Activated CD4-positive, alpha-beta T cell treated with anti-CD3 and anti-CD28 coated beads, Interleukin-2, amount 10 ng/mL, durations not matched to agents 24 days and 14 days (primary cell): ENCODE measurements at regions of chr6 and their contacts with region 1.

Region 1: DNA sequence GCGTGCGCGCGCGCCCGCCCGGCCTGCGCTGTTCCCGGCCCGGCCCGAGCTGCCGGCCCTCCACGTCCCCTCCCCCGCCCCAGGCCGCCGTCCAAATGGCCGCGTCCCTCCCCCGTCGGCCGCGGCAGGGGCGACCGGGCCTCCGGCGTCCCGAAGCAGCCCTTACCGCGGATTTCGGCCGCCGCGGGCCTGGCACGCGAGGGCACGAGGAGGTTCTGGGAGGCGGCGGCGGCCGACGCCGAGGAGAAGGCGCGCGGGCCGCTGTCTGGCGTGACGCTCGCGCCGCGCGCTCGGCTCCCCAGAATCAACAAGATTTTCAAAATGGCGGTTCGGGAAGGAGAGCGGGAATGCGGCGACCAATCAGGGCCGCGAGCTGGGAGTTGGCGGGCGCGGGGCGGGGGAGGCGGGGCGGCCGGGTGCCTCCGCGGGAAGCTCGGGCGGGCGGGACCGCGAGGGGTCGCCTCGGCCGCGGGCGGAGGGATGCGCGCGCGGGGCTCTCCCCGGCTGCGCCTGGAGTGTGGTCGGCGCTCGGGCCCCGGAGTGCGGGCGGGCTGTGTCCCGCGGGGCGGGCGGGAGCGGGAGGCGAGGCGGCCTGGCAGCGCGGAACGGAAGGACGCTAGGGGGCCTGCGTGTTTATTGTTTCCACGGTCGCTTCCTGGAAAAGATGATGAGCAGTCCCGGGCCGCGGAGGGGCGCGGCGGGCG is at the start of gene DEK:
- DNase-seq: peak; percentile 95
- H3K4me3 Mint-ChIP-seq: peak within 1 kb of the TSS; percentile 95
- H3K27ac Mint-ChIP-seq: peak within 1 kb of the TSS; percentile 94
- H3K4me1 Mint-ChIP-seq: peaks cover 43% of the 10 kb centered on the region
- H3K27me3 Mint-ChIP-seq: no peaks in the 10 kb centered on the region
- total RNA-seq, gene DEK: 170 and 175 TPM in 2 replicates

Region 2: DNA sequence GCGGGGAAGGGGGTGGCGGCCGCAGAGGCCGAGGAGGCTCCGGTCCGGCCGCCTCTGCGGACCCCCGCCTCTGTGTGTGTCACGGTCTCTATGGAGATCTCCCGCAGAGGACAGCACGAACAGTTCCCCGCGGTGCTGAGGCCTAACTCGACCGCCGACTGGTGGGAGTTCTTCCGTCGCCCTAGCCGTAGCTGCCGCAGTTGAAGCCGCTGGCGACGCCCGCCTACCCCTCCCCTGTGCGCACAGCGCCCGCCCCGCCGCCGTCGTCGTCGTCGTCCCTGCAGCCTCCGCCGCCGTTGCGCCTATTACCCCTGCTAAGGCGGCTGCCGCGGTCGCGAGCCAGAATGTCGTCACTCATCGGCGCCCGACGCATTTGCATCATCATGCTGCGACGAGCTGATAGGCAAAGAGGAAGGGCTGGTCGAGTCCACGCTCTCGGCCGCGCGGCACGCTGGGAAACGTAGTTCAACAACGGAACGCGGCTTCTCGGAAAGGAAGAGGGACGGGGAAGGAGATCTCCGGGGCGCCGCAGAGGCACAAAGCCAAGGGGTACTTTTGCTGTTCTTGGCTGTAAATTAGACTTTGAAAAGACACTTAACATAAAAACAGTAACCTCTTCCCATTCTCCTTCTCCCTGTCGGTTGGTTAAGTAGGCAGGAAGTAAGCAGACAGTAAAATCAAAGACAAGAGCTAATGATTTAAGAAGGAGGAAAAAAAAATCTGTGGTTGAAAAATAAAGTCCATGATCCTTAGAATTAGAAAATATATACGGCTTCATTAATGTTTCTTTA is 557.6 kb before region 1 on chr6 and contains the start of gene NUP153:
- intact Hi-C with region 1: loop called (anchors 5 kb)
- DNase-seq: peak; percentile 100
- H3K4me3 Mint-ChIP-seq: peak within 1 kb of the TSS; percentile 90
- H3K27ac Mint-ChIP-seq: peak within 1 kb of the TSS; percentile 95
- H3K4me1 Mint-ChIP-seq: peaks cover 28% of the 10 kb centered on the region
- H3K27me3 Mint-ChIP-seq: peaks cover 2% of the 10 kb centered on the region
- total RNA-seq, gene NUP153: 108 and 109 TPM in 2 replicates

Region 3: GRCh38 chr6:18115356-18115755 is 149.0 kb before region 1 on chr6:
- intact Hi-C with region 1: loop called (anchors 2 kb)
- DNase-seq: peak; percentile 70
- H3K4me3 Mint-ChIP-seq: peak overlapping the region; percentile 24
- H3K27ac Mint-ChIP-seq: peak overlapping the region; percentile 1
- H3K4me1 Mint-ChIP-seq: peaks cover 11% of the 10 kb centered on the region
- H3K27me3 Mint-ChIP-seq: peaks cover 57% of the 10 kb centered on the region

Region 4: GRCh38 chr6:18211338-18211737 is 53.0 kb before region 1 on chr6:
- intact Hi-C with region 1: loop called (anchors 2 kb)
- DNase-seq: peak; percentile 58
- H3K4me3 Mint-ChIP-seq: no peak overlapping the region
- H3K27ac Mint-ChIP-seq: no peak overlapping the region
- H3K4me1 Mint-ChIP-seq: peaks cover 8% of the 10 kb centered on the region
- H3K27me3 Mint-ChIP-seq: no peaks in the 10 kb centered on the region

Region 5: DNA sequence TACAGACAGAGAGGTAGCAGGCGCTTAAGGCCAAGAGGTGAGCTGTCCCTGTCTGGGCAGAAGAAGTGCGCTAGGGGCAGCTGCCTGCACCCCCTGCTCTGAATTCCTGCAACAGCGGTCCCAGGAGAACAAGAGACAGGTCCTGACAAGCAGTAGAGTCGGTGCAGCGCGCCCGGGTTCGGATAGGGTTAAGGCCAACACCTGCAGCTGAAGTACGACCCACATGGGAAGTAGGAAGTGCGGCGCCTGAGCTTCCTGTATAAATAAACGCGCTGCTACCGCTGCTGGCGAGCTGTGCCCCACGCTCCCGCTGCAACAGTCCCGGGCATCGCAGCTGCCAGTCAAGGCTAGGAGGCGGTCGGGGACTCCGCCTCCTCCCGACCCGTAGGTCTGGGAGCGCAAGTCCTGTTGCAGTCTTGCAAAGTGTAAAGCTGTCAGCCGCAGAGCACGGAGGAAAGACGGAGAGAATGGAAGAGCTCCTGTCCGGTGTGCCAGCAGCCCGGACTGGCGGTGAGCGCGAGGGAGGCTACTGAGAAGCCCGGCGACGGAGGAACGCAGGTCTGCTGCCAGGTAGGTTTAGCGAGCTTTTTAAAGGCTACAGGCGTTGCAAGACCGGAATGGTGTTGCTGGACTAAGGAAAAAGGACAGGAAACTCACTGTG is 122.8 kb after region 1 on chr6 and contains the start of gene RNF144B:
- intact Hi-C with region 1: loop called (anchors 5 kb)
- DNase-seq: peak; percentile 82
- H3K4me3 Mint-ChIP-seq: peak within 1 kb of the TSS; percentile 91
- H3K27ac Mint-ChIP-seq: peak within 1 kb of the TSS; percentile 42
- H3K4me1 Mint-ChIP-seq: peaks cover 21% of the 10 kb centered on the region
- H3K27me3 Mint-ChIP-seq: peaks cover 20% of the 10 kb centered on the region
- total RNA-seq, gene RNF144B: 0.19 and 0.40 TPM in 2 replicates

Region 6: GRCh38 chr6:18527836-18528743 is 263.7 kb after region 1 on chr6:
- intact Hi-C with region 1: no loop called
- DNase-seq: no peak
- H3K4me3 Mint-ChIP-seq: no peak overlapping the region
- H3K27ac Mint-ChIP-seq: no peak overlapping the region
- H3K4me1 Mint-ChIP-seq: no peaks in the 10 kb centered on the region
- H3K27me3 Mint-ChIP-seq: peaks cover 3% of the 10 kb centered on the region